ENCODE measurements at regions of chr19 and their contacts with region 1.

Region 1: DNA sequence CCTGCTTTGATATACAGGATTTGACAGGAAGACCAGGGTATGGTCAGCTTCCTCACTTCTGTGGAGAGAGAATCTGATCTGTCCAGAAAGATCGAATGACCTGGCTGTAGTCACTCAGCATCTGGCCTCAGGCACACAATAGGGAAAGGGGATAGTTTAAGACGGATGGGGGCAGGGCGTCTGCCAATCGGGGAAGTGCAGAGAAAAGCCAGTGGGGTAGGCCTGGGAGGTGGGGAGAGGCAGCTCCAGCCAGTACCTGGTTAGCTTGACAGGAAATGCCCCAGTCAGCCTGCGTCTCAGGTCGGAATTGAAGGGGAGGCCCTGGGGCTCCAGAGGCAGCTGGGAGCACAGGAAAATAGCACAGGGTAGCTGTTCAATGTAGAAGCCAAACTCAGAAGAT is 12.4 kb downstream of the ZNF444 start:
- DNase-seq: no peak
- ATAC-seq: no peak

Region 2: GRCh38 chr19:56097306-56097705 is 56.2 kb before region 1 on chr19:
- intact Hi-C with region 1: loop called (anchors 5 kb)
- DNase-seq: peak; percentile 60
- ATAC-seq: peak; percentile 17